PC-9 (cell line): ENCODE measurements at regions of chr5 and their contacts with region 1.

Region 1: DNA sequence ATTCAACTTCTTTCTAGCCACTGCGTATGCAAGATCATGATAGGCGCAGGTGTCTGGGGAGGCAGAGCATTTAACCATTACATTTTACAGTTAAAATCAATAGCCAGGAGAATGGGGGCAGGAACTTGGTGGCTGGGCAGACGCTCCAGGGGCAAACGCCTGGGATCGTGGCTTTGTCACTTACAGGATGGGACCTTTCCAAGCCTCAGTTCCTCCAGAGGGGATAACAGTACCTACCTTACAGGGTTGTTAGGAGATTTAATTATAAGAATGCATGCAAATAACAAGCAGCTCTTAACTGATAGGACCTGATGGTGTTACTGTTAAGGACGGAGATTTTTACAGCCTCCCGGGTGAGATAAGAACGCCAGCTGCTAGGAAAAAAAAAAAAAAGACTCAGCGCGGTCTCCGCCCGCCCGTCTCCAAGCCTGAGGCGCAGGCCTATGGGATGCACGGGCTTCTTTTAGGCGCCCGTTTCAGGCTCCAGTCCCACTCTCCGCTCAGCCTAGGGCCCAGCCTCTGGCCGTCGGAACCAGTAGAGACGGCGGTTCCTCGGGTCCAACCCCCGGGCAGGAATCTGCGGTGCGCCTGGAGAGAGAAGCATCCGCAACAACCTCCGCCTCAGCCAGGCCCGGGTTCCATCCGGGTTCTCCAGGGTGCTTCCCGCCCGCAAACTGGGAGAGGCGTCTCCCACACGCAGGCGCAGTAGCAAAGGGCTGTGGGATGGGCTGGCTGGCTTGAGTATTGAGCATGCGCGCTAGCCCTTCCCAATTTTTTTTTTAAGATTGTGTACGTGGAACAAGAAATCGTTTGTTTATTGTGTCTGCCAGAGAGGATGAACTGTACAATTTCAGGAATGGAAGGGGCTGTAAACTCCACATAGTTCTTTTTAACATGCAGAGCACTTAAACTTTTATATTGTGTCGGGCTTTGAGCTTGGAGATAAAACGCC is at the start of gene FAM200C:
- DNase-seq: peak; percentile 82 to 92
- H3K4me3 ChIP-seq: peak within 1 kb of the TSS; percentile 60
- H3K27ac ChIP-seq: peak within 1 kb of the TSS; percentile 38
- H3K4me1 ChIP-seq: peaks cover 11% of the 10 kb centered on the region
- H3K27me3 ChIP-seq: no peaks in the 10 kb centered on the region
- CTCF ChIP-seq: no peak
- total RNA-seq, gene FAM200C: 8.6 and 10.5 TPM in 2 replicates

Region 2: GRCh38 chr5:159098603-159099436 is 1300.9 kb before region 1 on chr5:
- CTCF ChIA-PET with region 1: interaction called, 14 read pairs
- POLR2A ChIA-PET with region 1: no interaction called
- intact Hi-C with region 1: no loop called
- DNase-seq: no peak
- H3K4me3 ChIP-seq: no peak overlapping the region
- H3K27ac ChIP-seq: no peak overlapping the region
- H3K4me1 ChIP-seq: no peaks in the 10 kb centered on the region
- H3K27me3 ChIP-seq: peaks cover 30% of the 10 kb centered on the region; the same call in 1 of the 2 replicates
- CTCF ChIP-seq: no peak

Region 3: GRCh38 chr5:159163027-159163700 is 1236.5 kb before region 1 on chr5:
- CTCF ChIA-PET with region 1: no interaction called
- POLR2A ChIA-PET with region 1: no interaction called
- intact Hi-C with region 1: loop called (anchors 5 kb)
- DNase-seq: no peak
- H3K4me3 ChIP-seq: no peak overlapping the region
- H3K27ac ChIP-seq: no peak overlapping the region
- H3K4me1 ChIP-seq: no peaks in the 10 kb centered on the region
- H3K27me3 ChIP-seq: no peaks in the 10 kb centered on the region
- CTCF ChIP-seq: no peak

Region 4: DNA sequence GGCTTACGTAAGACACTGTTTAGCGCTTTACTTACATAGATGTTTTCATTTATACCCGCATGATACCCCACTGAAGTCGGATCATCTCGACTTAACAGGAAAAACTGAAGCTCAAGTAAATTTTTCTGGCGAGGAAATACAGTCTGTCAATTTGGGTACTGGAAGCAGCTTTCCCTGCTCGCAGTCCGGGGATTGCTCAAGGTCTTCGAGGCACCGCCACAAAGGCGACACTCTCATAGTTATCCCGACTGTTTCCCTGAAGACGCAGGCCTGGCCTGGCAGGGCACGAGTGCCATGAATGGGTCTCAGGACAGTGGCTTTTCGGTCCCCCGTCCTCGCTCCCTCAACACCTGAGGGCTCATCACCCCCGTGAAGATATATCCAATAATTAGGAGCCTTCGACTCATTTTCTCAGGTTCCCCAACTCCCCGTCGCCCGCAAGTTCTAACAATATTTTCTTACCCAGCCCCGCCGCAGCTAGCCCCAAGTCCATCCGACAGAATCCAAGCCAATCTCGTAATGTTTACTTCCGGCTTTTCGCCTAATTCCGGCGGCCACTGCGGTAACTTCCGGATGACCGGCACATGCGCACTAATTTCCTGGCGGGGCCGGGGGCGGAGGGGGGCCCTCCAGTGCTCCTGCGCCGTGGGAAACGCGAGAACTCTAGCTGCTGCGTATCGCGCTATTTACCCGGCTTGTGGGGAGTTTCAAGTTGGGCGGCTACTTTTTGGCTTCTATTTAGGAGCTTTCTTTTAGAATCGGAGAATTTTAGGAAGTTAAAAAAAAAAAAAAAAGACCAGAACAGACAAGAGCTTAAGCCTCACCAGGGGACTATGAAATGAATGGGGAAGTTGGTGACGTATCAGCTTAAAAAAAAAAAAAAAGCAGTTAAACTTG is 19.1 kb after region 1 on chr5 and contains the start of gene SLU7:
- CTCF ChIA-PET with region 1: no interaction called
- POLR2A ChIA-PET with region 1: no interaction called
- intact Hi-C with region 1: loop called (anchors 2 kb)
- DNase-seq: peak; percentile 87 to 97
- H3K4me3 ChIP-seq: peak within 1 kb of the TSS; percentile 66
- H3K27ac ChIP-seq: peak within 1 kb of the TSS; percentile 85
- H3K4me1 ChIP-seq: peaks cover 45% of the 10 kb centered on the region
- H3K27me3 ChIP-seq: no peaks in the 10 kb centered on the region
- CTCF ChIP-seq: no peak
- total RNA-seq, gene SLU7: 53.6 and 75.3 TPM in 2 replicates

Region 5: DNA sequence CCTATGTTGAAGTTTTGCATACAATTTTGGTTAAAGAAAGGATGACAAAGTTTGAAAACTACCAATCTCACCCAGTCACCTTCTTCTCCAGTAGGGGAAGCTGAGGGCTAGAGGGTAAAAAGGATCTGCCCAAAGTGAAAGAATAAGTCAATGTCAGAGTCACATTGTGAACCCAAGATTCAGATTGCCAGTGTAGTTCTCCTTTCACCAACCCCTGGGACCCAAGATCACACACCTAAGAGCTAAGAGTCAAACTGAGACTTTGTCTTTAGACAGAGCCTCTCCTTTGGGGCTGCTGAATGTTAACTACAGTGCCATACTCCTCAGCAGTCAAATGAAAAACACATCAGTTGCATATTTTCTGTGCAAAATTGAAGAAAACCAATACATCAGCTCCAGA is 241.7 kb after region 1 on chr5:
- CTCF ChIA-PET with region 1: no interaction called
- POLR2A ChIA-PET with region 1: no interaction called
- intact Hi-C with region 1: no loop called
- DNase-seq: no peak
- H3K4me3 ChIP-seq: no peak overlapping the region
- H3K27ac ChIP-seq: no peak overlapping the region
- H3K4me1 ChIP-seq: no peaks in the 10 kb centered on the region
- H3K27me3 ChIP-seq: 0 out of 2 replicates have a peak, but pooled peaks cover 6% of the 10 kb centered on the region
- CTCF ChIP-seq: no peak

Region 6: GRCh38 chr5:161783297-161783696 is 1383.6 kb after region 1 on chr5:
- CTCF ChIA-PET with region 1: no interaction called
- POLR2A ChIA-PET with region 1: interaction called, 10 read pairs
- intact Hi-C with region 1: no loop called
- DNase-seq: no peak
- H3K4me3 ChIP-seq: no peak overlapping the region
- H3K27ac ChIP-seq: no peak overlapping the region
- H3K4me1 ChIP-seq: no peaks in the 10 kb centered on the region
- H3K27me3 ChIP-seq: no peaks in the 10 kb centered on the region
- CTCF ChIP-seq: no peak